WTC11 (cell line): ENCODE measurements at regions of chr22 and their contacts with region 1.

Region 1: DNA sequence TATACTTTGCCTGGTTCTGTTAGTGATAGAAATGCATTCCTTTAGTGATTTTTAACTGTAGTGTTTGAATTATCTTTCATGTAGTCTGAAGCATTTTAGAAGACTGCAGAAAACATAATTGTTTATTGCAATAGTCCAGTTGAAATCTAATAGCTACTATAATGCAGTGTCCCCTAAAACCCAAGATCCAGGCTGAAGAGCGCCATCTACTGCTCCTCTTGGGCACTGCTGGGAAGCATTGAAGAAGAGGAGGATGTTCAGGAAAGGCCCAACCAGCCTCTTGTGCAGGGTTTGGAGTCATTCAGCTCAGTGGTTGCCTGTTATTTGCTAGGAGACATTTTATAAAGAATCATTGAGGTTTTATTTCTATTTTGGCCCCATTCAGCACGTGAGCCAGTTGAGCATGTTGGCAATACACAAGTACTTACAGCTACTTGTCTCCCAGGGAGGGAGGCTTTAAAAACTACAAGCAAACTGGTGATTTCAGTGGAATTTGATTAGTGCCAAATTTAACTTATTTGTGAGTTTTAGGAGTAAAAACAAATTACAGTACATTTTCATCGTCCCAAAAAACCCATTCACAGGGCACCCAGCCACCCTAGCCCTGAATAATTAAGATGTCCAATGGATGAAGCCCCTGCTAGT is 74.9 kb upstream of the HORMAD2 start:
- DNase-seq: peak; percentile 81
- ATAC-seq: peak; percentile 84
- H3K4me3 Mint-ChIP-seq: no peak overlapping the region
- H3K27ac Mint-ChIP-seq: no peak overlapping the region
- H3K4me1 Mint-ChIP-seq: no peaks in the 10 kb centered on the region
- H3K27me3 Mint-ChIP-seq: no peaks in the 10 kb centered on the region
- CTCF ChIP-seq: peak; percentile 85

Region 2: GRCh38 chr22:29625090-29625825 is 380.1 kb before region 1 on chr22:
- CTCF ChIA-PET with region 1: interaction called, 11 read pairs
- POLR2A ChIA-PET with region 1: no interaction called
- DNase-seq: peak; percentile 34
- ATAC-seq: peak; percentile 53
- H3K4me3 Mint-ChIP-seq: no peak overlapping the region
- H3K27ac Mint-ChIP-seq: peak overlapping the region; percentile 85
- H3K4me1 Mint-ChIP-seq: peaks cover 52% of the 10 kb centered on the region
- H3K27me3 Mint-ChIP-seq: no peaks in the 10 kb centered on the region
- CTCF ChIP-seq: peak; percentile 67

Region 3: GRCh38 chr22:29635734-29636357 is 369.5 kb before region 1 on chr22:
- CTCF ChIA-PET with region 1: interaction called, 15 read pairs
- POLR2A ChIA-PET with region 1: no interaction called
- DNase-seq: no peak
- ATAC-seq: peak; percentile 90
- H3K4me3 Mint-ChIP-seq: no peak overlapping the region
- H3K27ac Mint-ChIP-seq: peak overlapping the region; percentile 39; the same call in 1 of the 2 replicates
- H3K4me1 Mint-ChIP-seq: peaks cover 3% of the 10 kb centered on the region; the same call in 1 of the 2 replicates
- H3K27me3 Mint-ChIP-seq: no peaks in the 10 kb centered on the region
- CTCF ChIP-seq: peak; percentile 36

Region 4: DNA sequence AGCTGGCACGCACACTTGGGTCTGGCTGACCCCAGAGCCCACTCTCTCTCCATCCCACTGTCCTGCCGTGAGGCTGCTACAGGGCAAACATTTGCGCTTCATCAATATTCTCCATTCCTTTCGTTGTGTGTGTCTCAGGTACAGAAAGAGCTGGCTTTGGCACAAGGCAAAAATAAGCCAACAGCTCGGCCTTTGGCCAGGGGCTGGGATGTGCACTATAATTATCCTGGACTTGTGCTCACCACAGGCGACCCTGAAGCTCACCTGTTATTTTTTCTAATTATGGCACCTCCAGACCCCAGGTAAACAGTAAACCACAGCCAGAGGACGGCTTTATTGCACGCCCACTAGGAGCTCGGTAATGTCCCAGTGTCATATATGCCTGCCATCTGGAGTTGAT is 249.4 kb before region 1 on chr22:
- CTCF ChIA-PET with region 1: no interaction called
- POLR2A ChIA-PET with region 1: no interaction called
- DNase-seq: no peak
- ATAC-seq: no peak
- H3K4me3 Mint-ChIP-seq: no peak overlapping the region
- H3K27ac Mint-ChIP-seq: no peak overlapping the region
- H3K4me1 Mint-ChIP-seq: no peaks in the 10 kb centered on the region
- H3K27me3 Mint-ChIP-seq: no peaks in the 10 kb centered on the region
- CTCF ChIP-seq: no peak

Region 5: GRCh38 chr22:29790061-29790460 is 215.3 kb before region 1 on chr22:
- CTCF ChIA-PET with region 1: interaction called, 11 read pairs
- POLR2A ChIA-PET with region 1: no interaction called
- DNase-seq: no peak
- ATAC-seq: no peak
- H3K4me3 Mint-ChIP-seq: no peak overlapping the region
- H3K27ac Mint-ChIP-seq: no peak overlapping the region
- H3K4me1 Mint-ChIP-seq: peaks cover 5% of the 10 kb centered on the region
- H3K27me3 Mint-ChIP-seq: no peaks in the 10 kb centered on the region
- CTCF ChIP-seq: no peak

Region 6: DNA sequence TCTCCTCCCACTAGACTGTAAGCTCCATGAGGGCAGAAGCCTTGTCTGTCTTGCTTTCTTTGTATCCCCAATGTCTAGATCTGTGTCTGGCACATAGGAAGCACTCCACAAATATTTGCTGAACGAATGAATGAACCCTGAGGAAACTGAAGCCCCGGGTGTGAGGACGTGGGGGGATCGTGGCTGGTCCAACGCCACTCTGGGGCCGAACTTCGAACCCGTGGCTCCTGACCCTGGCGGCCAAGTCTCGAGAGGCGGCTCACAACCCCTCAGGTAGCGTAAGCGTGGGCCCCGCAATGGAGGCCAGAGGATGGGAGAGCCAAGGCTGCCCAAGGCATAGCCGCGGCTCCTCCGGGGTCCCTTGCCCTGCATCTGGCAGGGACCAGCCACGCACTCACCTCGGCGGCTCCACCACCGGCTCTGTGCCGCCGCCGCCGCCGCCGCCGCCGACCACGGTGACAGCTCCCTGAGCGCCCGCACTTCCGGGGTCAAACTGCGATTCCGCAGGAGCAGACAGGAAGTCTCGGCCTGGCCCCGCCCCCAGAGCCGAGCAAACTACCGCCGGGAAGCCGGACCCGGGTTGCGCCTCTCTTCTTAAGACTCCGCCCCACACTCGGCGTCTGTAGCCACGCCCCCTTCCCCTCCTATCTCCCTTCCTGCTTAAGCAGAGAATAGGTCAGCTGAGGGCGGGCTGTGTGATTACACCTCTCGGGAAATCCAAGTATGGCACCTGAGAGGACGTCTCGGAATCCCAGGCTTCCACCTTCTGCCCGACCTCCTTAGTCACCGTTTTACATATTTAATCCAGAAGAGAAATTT is 167.3 kb before region 1 on chr22 and contains the start of gene ASCC2:
- CTCF ChIA-PET with region 1: interaction called, 13 read pairs
- POLR2A ChIA-PET with region 1: no interaction called
- DNase-seq: peak; percentile 100
- ATAC-seq: peak; percentile 100
- H3K4me3 Mint-ChIP-seq: peak within 1 kb of the TSS; percentile 87
- H3K27ac Mint-ChIP-seq: peak within 1 kb of the TSS; percentile 90
- H3K4me1 Mint-ChIP-seq: peaks cover 19% of the 10 kb centered on the region
- H3K27me3 Mint-ChIP-seq: no peaks in the 10 kb centered on the region
- CTCF ChIP-seq: no peak
- total RNA-seq, gene ASCC2: 42.2 to 43.9 TPM (median 43.6 TPM) in 3 replicates

Region 7: GRCh38 chr22:29883045-29883774 is 122.1 kb before region 1 on chr22 and contains the start of gene MTMR3:
- CTCF ChIA-PET with region 1: interaction called, 15 read pairs
- POLR2A ChIA-PET with region 1: no interaction called
- DNase-seq: peak; percentile 96
- ATAC-seq: peak; percentile 81
- H3K4me3 Mint-ChIP-seq: peak within 1 kb of the TSS; percentile 83; the same call in 1 of the 2 replicates
- H3K27ac Mint-ChIP-seq: peak within 1 kb of the TSS; percentile 35
- H3K4me1 Mint-ChIP-seq: peaks cover 6% of the 10 kb centered on the region
- H3K27me3 Mint-ChIP-seq: peaks cover 8% of the 10 kb centered on the region; the same call in 1 of the 2 replicates
- CTCF ChIP-seq: no peak
- total RNA-seq, gene MTMR3: 17.0 to 19.5 TPM (median 19.2 TPM) in 3 replicates

Region 8: DNA sequence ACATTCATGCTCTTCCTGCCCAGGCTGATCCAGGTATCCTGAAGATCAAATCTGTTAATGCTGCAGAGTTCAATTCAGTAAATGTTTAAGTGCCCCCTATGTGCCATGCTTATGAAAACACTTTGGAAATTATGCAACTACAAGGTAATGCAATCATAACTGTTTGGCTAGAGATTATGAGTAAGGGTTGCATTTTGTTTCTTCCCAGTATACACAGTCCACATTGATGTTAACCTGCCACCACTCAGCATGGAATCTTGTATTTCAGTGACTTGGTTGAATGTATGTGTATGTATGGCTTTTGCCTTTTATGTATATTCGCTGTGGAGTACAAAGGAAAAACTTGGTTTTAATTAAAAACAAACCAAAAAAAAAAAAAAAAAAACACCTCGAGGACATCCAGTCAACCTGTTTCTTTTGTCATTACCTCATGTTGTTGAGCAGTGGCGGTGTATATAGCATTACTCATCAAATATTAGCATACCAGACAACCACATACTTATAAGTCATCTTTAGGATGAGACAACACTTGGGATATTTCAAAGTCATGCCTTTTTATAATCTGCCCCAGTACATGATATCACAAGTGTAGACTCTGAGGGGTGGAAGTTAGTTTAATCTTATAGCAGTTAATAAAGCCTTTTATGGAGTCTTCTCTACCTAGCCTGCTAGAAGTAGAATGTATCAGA is 11.2 kb before region 1 on chr22:
- CTCF ChIA-PET with region 1: interaction called, 26 read pairs
- POLR2A ChIA-PET with region 1: no interaction called
- DNase-seq: no peak
- ATAC-seq: no peak
- H3K4me3 Mint-ChIP-seq: no peak overlapping the region
- H3K27ac Mint-ChIP-seq: peak overlapping the region; percentile 26
- H3K4me1 Mint-ChIP-seq: peaks cover 27% of the 10 kb centered on the region
- H3K27me3 Mint-ChIP-seq: no peaks in the 10 kb centered on the region
- CTCF ChIP-seq: no peak

Region 9: DNA sequence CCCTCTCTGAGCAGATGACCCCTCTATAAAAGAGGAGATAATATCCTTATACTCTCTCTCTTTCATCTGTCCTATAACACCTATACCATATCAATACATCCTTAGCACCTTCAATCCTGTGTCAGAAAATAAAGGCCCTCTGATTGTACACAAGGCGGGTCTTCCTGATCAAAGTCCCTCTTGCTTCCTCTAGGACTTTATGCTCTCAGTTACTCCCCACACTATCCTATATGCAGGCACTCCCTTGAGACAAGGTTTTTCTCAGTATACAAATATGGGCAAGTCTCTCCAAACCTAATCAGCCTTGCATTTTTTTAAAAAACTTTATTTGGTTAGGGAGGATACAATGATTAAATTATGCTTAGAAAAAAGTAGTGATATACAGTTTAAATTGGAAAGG is 57.6 kb after region 1 on chr22:
- CTCF ChIA-PET with region 1: no interaction called
- POLR2A ChIA-PET with region 1: no interaction called
- DNase-seq: no peak
- ATAC-seq: no peak
- H3K4me3 Mint-ChIP-seq: no peak overlapping the region
- H3K27ac Mint-ChIP-seq: no peak overlapping the region
- H3K4me1 Mint-ChIP-seq: no peaks in the 10 kb centered on the region
- H3K27me3 Mint-ChIP-seq: peaks cover 3% of the 10 kb centered on the region; the same call in 1 of the 2 replicates
- CTCF ChIP-seq: no peak

Region 10: DNA sequence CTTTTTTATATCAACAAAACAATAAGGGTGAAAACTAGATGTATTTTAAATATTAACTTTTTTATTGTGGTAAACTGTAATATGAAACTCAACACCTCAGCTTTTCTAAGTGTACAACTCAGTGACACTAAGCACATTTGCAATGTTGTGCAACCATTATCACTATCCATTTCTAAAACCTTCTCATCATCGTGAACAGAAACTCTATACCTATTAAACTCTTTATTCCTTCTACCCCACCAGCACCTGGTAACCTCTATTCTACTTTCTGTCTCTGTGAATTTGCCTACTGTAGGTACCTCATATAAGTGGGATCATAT is 84.3 kb after region 1 on chr22:
- CTCF ChIA-PET with region 1: no interaction called
- POLR2A ChIA-PET with region 1: no interaction called
- DNase-seq: no peak
- ATAC-seq: no peak
- H3K4me3 Mint-ChIP-seq: no peak overlapping the region
- H3K27ac Mint-ChIP-seq: no peak overlapping the region
- H3K4me1 Mint-ChIP-seq: no peaks in the 10 kb centered on the region
- H3K27me3 Mint-ChIP-seq: peaks cover 2% of the 10 kb centered on the region; the same call in 1 of the 2 replicates
- CTCF ChIP-seq: no peak

Region 11: GRCh38 chr22:30158744-30159500 is 153.6 kb after region 1 on chr22:
- CTCF ChIA-PET with region 1: no interaction called
- POLR2A ChIA-PET with region 1: no interaction called
- DNase-seq: no peak
- ATAC-seq: peak; percentile 32; the same call in 1 of the 2 replicates
- H3K4me3 Mint-ChIP-seq: no peak overlapping the region; the same call in 1 of the 2 replicates
- H3K27ac Mint-ChIP-seq: peak overlapping the region; percentile 51; the same call in 1 of the 2 replicates
- H3K4me1 Mint-ChIP-seq: peaks cover 14% of the 10 kb centered on the region
- H3K27me3 Mint-ChIP-seq: peaks cover 13% of the 10 kb centered on the region
- CTCF ChIP-seq: no peak